ENCODE measurements at regions of chr4 and their contacts with region 1.

Region 1: DNA sequence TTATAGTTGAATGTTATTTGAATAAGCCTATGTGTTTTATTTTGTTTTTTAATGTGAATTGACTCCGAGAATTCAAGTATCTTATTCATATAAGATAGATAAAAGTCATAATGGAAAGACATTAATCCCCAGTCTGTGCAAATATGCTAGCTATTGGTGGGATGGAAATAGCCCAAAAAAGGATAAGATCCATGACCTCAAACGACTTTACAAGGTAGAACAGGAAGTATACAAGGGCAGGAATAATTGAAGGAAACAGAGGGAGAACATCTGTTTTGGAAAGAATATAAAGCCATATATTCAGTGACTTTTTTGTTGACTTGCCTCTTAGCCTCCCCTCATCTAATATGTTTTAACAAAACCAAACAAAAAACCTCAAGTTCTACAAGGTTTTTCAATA is 9.0 kb downstream of the ABCE1 start:
- DNase-seq: no peak
- H3K4me3 ChIP-seq: no peak overlapping the region
- H3K27ac ChIP-seq: no peak overlapping the region
- H3K4me1 ChIP-seq: no peaks in the 10 kb centered on the region
- H3K27me3 ChIP-seq: no peaks in the 10 kb centered on the region
- CTCF ChIP-seq: no peak

Region 2: DNA sequence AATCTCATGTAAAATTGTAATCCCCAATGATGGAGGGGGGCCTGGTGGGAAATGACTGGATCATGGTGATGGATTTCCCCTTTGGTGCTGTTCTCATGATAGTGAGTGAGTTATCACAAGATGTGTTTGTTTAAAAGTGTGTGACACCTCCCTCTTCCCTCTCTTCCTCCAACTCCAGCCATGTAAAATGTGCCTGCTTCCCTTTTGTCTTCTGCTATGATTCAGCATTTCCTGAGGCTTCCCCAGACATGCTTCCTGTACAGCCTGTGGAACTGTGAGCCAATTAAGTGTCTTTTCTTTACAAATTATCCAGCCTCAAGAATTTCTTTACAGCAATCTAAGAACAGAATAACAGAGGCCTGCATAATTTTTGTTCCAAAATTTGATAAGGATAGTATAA is 94.3 kb before region 1 on chr4:
- CTCF ChIA-PET with region 1: no interaction called
- dilution Hi-C with region 1: no loop called
- in situ Hi-C with region 1: no loop called
- intact Hi-C with region 1: no loop called
- DNase-seq: peak; percentile 62
- H3K4me3 ChIP-seq: no peak overlapping the region
- H3K27ac ChIP-seq: peak overlapping the region; percentile 22
- H3K4me1 ChIP-seq: peaks cover 3% of the 10 kb centered on the region
- H3K27me3 ChIP-seq: no peaks in the 10 kb centered on the region
- CTCF ChIP-seq: no peak

Region 3: GRCh38 chr4:145125396-145125795 is 18.3 kb after region 1 on chr4:
- CTCF ChIA-PET with region 1: no interaction called
- dilution Hi-C with region 1: no loop called
- in situ Hi-C with region 1: no loop called
- intact Hi-C with region 1: loop called (anchors 2 kb)
- DNase-seq: no peak
- H3K4me3 ChIP-seq: no peak overlapping the region
- H3K27ac ChIP-seq: no peak overlapping the region
- H3K4me1 ChIP-seq: no peaks in the 10 kb centered on the region
- H3K27me3 ChIP-seq: no peaks in the 10 kb centered on the region
- CTCF ChIP-seq: no peak

Region 4: GRCh38 chr4:145154573-145154972 is 47.4 kb after region 1 on chr4:
- CTCF ChIA-PET with region 1: interaction called, 18 read pairs
- dilution Hi-C with region 1: no loop called
- in situ Hi-C with region 1: no loop called
- intact Hi-C with region 1: no loop called
- DNase-seq: peak; percentile 8
- H3K4me3 ChIP-seq: no peak overlapping the region
- H3K27ac ChIP-seq: no peak overlapping the region
- H3K4me1 ChIP-seq: no peaks in the 10 kb centered on the region
- H3K27me3 ChIP-seq: no peaks in the 10 kb centered on the region
- CTCF ChIP-seq: peak; percentile 28 to 51

Region 5: GRCh38 chr4:145739840-145740239 is 632.7 kb after region 1 on chr4:
- CTCF ChIA-PET with region 1: no interaction called
- dilution Hi-C with region 1: no loop called
- in situ Hi-C with region 1: no loop called
- intact Hi-C with region 1: no loop called
- DNase-seq: no peak
- H3K4me3 ChIP-seq: no peak overlapping the region
- H3K27ac ChIP-seq: no peak overlapping the region
- H3K4me1 ChIP-seq: peaks cover 19% of the 10 kb centered on the region
- H3K27me3 ChIP-seq: no peaks in the 10 kb centered on the region
- CTCF ChIP-seq: no peak

Measured in mammary epithelial cell (primary cell).